Lower lobe of right lung (tissue), 2 donors: ENCODE measurements at regions of chr5 and their contacts with region 1.

Region 1: DNA sequence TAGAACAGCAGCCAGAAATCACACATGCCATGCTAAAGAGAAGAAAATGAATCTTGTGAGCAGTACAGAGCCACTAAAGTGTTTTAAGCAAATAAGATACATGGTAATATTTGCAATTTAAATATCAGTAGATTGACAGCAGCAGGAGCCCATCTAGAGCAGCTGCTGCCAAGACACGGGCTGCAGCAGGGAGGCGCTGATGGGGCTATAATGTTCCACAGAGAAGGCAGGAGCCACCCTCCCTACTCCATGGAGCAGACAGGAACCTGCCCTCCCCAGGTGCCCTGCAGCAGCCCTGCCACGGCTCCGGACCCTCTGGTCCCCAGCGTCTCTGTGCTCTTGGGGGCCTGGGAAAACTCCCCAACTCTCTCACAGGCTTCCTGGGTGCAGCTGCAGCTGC is 224.1 kb upstream of the ISL1 start:
- DNase-seq: peak; percentile 27
- ATAC-seq: no peak
- H3K4me3 ChIP-seq: no peak overlapping the region
- H3K27ac ChIP-seq: no peak overlapping the region
- H3K4me1 ChIP-seq: no peaks in the 10 kb centered on the region
- H3K27me3 ChIP-seq: no peaks in the 10 kb centered on the region
- CTCF ChIP-seq: no peak

Region 2: GRCh38 chr5:51509288-51509687 is 350.1 kb after region 1 on chr5:
- intact Hi-C with region 1: loop called (anchors 10 kb)
- DNase-seq: no peak
- ATAC-seq: no peak
- H3K4me3 ChIP-seq: no peak overlapping the region
- H3K27ac ChIP-seq: no peak overlapping the region
- H3K4me1 ChIP-seq: no peaks in the 10 kb centered on the region
- H3K27me3 ChIP-seq: no peaks in the 10 kb centered on the region
- CTCF ChIP-seq: no peak